Heart right ventricle (tissue), 16 donors: ENCODE measurements at regions of chr17 and their contacts with region 1.

Region 1: GRCh38 chr17:30267625-30268024 is 24.1 kb downstream of the BLMH start:
- DNase-seq: no peak
- ATAC-seq: no peak
- H3K4me3 ChIP-seq: no peak overlapping the region
- H3K27ac ChIP-seq: no peak overlapping the region
- H3K4me1 ChIP-seq: peaks cover 2 to 30% (median 24%) of the 10 kb centered on the region in 9 donors
- H3K27me3 ChIP-seq: no peaks in the 10 kb centered on the region
- CTCF ChIP-seq: no peak

Region 2: DNA sequence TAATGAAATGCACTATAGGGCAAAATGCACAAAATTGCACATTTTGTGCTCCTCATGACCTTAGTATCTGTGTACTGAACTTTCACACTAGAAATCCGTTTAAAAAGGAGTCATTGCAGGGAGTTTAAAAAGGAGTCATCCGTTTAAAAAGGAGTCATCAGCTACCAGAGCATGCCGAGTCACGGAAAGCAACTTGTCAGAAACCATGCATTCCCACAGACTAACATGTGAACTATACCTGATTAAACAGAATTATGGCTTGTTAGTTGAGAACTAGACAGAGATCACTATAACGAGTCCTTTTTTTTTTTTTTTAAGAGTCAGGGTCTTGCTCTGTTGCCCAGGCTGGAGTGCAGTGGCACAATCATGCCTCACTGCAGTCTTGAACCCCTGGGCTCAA is 68.0 kb before region 1 on chr17:
- intact Hi-C with region 1: loop called in 1 of 10 experiments (anchors 2 kb)
- DNase-seq: no peak
- ATAC-seq: no peak
- H3K4me3 ChIP-seq: no peak overlapping the region
- H3K27ac ChIP-seq: no peak overlapping the region
- H3K4me1 ChIP-seq: peaks cover 0 to 8% (median 0%) of the 10 kb centered on the region in 9 donors
- H3K27me3 ChIP-seq: peaks cover 0 to 12% (median 0%) of the 10 kb centered on the region in 7 donors
- CTCF ChIP-seq: no peak

Region 3: GRCh38 chr17:30318155-30318554 is 50.5 kb after region 1 on chr17:
- intact Hi-C with region 1: loop called in 1 of 10 experiments (anchors 5 kb)
- DNase-seq: no peak
- ATAC-seq: no peak
- H3K4me3 ChIP-seq: no peak overlapping the region
- H3K27ac ChIP-seq: no peak overlapping the region
- H3K4me1 ChIP-seq: peaks cover 0 to 3% (median 0%) of the 10 kb centered on the region in 9 donors
- H3K27me3 ChIP-seq: peaks cover 0 to 5% (median 0%) of the 10 kb centered on the region in 7 donors
- CTCF ChIP-seq: no peak

Region 4: DNA sequence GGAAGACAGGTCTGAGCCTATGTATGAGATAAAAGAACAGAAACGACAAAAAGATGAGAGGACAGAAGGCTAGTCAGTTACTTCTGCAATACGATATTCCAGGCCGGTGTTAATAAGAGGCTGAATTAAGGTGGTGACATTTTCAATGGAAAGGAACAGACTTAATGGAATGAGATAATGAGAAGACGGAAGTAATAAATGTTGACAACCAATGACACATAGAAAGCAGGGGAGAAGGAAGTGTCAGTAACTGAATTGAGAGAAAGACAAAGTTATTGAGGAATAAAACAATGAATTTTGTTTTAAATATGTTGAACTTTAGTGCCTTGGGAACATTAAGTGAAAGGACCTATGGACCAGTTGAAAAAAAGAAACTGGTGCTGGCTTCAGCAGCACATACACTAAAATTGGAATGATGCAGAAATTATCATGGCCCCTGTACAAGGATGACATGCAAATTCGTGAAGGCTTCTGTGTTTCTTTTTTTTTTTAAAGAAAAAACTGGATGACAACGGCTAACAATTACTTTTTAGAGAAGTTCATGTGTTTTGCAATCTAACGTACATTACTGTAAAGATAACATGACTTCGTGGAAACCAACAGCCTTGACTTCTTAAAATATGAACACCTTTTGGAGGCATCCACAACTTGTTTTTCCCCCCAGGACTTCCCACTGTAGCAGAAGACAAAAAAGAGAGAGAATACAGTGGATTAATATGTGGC is 92.6 kb after region 1 on chr17:
- intact Hi-C with region 1: no loop called
- DNase-seq: no peak
- ATAC-seq: no peak
- H3K4me3 ChIP-seq: no peak overlapping the region
- H3K27ac ChIP-seq: peak overlapping the region in 1 of 10 donors; percentile 69
- H3K4me1 ChIP-seq: peaks cover 0 to 28% (median 0%) of the 10 kb centered on the region in 9 donors
- H3K27me3 ChIP-seq: no peaks in the 10 kb centered on the region
- CTCF ChIP-seq: no peak